ENCODE measurements at regions of chr7 and their contacts with region 1.

Region 1: GRCh38 chr7:101733713-101734475 is 83.5 kb upstream of the CUX1 start:
- DNase-seq: peak in 1 of 2 experiments; percentile 79
- H3K4me3 ChIP-seq: no peak overlapping the region
- H3K27ac ChIP-seq: no peak overlapping the region
- H3K4me1 ChIP-seq: peaks cover 26% of the 10 kb centered on the region
- H3K27me3 ChIP-seq: no peaks in the 10 kb centered on the region
- CTCF ChIP-seq: no peak

Region 2: GRCh38 chr7:101315336-101315735 is 418.6 kb before region 1 on chr7:
- CTCF ChIA-PET with region 1: interaction called, 16 read pairs
- POLR2A ChIA-PET with region 1: no interaction called
- intact Hi-C with region 1: no loop called
- DNase-seq: peak in 1 of 2 experiments; percentile 21
- H3K4me3 ChIP-seq: no peak overlapping the region
- H3K27ac ChIP-seq: no peak overlapping the region
- H3K4me1 ChIP-seq: no peaks in the 10 kb centered on the region
- H3K27me3 ChIP-seq: no peaks in the 10 kb centered on the region
- CTCF ChIP-seq: peak; percentile 78

Region 3: GRCh38 chr7:101614939-101615302 is 119.0 kb before region 1 on chr7:
- CTCF ChIA-PET with region 1: no interaction called
- POLR2A ChIA-PET with region 1: no interaction called
- intact Hi-C with region 1: loop called (anchors 5 kb)
- DNase-seq: peak; percentile 74 to 94
- H3K4me3 ChIP-seq: no peak overlapping the region
- H3K27ac ChIP-seq: no peak overlapping the region
- H3K4me1 ChIP-seq: peaks cover 15% of the 10 kb centered on the region
- H3K27me3 ChIP-seq: no peaks in the 10 kb centered on the region
- CTCF ChIP-seq: no peak

Region 4: DNA sequence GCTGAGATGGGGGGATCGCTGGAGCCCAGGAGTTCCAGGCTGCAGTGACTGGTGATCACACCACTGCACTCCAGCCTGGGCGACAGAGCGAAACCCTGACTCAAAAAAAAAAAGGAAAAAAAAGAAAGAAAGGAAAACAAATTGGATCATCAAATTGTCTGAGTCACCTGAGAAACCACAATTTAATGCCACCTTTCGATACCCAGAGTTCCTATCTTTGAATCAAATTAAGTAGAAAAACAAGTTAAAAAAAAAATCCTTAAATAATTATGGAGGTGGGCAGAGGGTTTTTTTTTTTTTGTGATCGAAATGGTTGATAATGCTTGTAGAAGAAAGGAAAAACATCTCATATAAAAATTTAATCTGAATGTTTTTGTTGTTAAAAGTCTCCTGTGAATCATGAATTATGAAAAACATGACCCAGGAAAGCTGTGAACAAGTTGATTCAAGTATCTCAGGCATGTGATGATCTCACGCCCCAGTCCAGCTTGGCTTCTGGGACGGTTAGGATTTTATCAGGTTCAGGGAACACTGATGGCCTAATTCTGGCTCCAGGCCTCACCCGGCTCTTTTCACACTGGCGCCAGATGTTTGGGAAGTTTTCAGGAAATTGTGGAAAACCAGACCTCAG is 58.3 kb after region 1 on chr7:
- CTCF ChIA-PET with region 1: no interaction called
- POLR2A ChIA-PET with region 1: no interaction called
- intact Hi-C with region 1: loop called (anchors 1 kb)
- DNase-seq: peak; percentile 66 to 84
- H3K4me3 ChIP-seq: no peak overlapping the region; the same call in 1 of the 2 replicates
- H3K27ac ChIP-seq: peak overlapping the region; percentile 89
- H3K4me1 ChIP-seq: peaks cover 21% of the 10 kb centered on the region
- H3K27me3 ChIP-seq: no peaks in the 10 kb centered on the region
- CTCF ChIP-seq: no peak

Region 5: DNA sequence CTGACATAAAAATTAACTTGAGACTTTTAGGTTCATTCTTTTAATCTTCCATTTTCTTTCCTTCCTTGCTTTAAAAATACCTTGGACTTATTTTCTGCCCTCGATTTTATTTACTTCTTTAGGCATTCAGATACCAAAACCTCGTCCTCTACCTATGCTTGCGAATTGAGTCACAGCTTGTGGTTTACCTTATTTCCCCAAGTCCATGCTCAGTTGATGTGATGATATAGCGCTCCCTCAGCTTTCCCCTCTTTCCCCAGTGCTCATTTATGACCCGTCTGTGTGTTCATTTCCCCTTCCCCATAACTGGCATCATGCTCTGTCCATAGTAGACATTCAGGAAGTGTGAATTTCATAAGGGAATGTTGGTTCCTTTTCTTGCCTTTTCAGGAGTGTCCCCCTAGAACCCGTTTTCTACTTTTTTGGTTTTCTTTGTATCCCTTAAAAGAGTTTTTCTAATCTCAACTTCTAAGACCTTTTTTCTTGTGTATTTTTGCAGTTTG is 643.1 kb after region 1 on chr7:
- CTCF ChIA-PET with region 1: no interaction called
- POLR2A ChIA-PET with region 1: no interaction called
- intact Hi-C with region 1: no loop called
- DNase-seq: no peak
- H3K4me3 ChIP-seq: no peak overlapping the region
- H3K27ac ChIP-seq: no peak overlapping the region
- H3K4me1 ChIP-seq: no peaks in the 10 kb centered on the region
- H3K27me3 ChIP-seq: no peaks in the 10 kb centered on the region
- CTCF ChIP-seq: no peak

Measured in PC-9 (cell line).